GM12878 (cell line): ENCODE measurements at regions of chr11 and their contacts with region 1.

Region 1: GRCh38 chr11:33329705-33330329 is 72.6 kb downstream of the HIPK3 start:
- DNase-seq: no peak
- ATAC-seq: peak; percentile 97
- H3K4me3 ChIP-seq: no peak overlapping the region
- H3K27ac ChIP-seq: no peak overlapping the region
- H3K4me1 ChIP-seq: peaks cover under 1% of the 10 kb centered on the region; the same call in 1 of the 2 replicates
- H3K27me3 ChIP-seq: no peaks in the 10 kb centered on the region
- CTCF ChIP-seq: peak; percentile 62 to 79 (median 64)
- EP300 ChIP-seq: no peak
- POLR2A ChIP-seq: no peak
- RAD21 ChIP-seq: peak; percentile 87

Region 2: GRCh38 chr11:32953700-32954099 is 376.1 kb before region 1 on chr11:
- CTCF ChIA-PET with region 1: no interaction called
- POLR2A ChIA-PET with region 1: no interaction called
- RAD21 ChIA-PET with region 1: no interaction called
- SMC1A ChIA-PET with region 1: no interaction called
- in situ Hi-C with region 1: loop called (anchors 10 kb)
- intact Hi-C with region 1: no loop called
- DNase-seq: no peak
- ATAC-seq: no peak
- H3K4me3 ChIP-seq: no peak overlapping the region
- H3K27ac ChIP-seq: no peak overlapping the region
- H3K4me1 ChIP-seq: no peaks in the 10 kb centered on the region
- H3K27me3 ChIP-seq: no peaks in the 10 kb centered on the region
- CTCF ChIP-seq: no peak
- EP300 ChIP-seq: no peak
- POLR2A ChIP-seq: no peak
- RAD21 ChIP-seq: no peak

Region 3: GRCh38 chr11:32960553-32961164 is 369.2 kb before region 1 on chr11:
- CTCF ChIA-PET with region 1: no interaction called
- POLR2A ChIA-PET with region 1: no interaction called
- RAD21 ChIA-PET with region 1: no interaction called
- SMC1A ChIA-PET with region 1: no interaction called
- in situ Hi-C with region 1: loop called (anchors 10 kb)
- intact Hi-C with region 1: loop called (anchors 5 kb)
- DNase-seq: peak; percentile 21
- ATAC-seq: peak; percentile 65
- H3K4me3 ChIP-seq: no peak overlapping the region
- H3K27ac ChIP-seq: no peak overlapping the region
- H3K4me1 ChIP-seq: no peaks in the 10 kb centered on the region
- H3K27me3 ChIP-seq: no peaks in the 10 kb centered on the region
- CTCF ChIP-seq: peak; percentile 38 to 71 (median 59); a peak in 5 of 6 replicates
- EP300 ChIP-seq: no peak
- POLR2A ChIP-seq: no peak
- RAD21 ChIP-seq: peak; percentile 90

Region 4: GRCh38 chr11:33161120-33162005 is 168.5 kb before region 1 on chr11 and contains the start of gene CSTF3:
- CTCF ChIA-PET with region 1: interaction called, 134 read pairs
- POLR2A ChIA-PET with region 1: no interaction called
- RAD21 ChIA-PET with region 1: interaction called, 37 read pairs
- SMC1A ChIA-PET with region 1: interaction called, 65 read pairs
- in situ Hi-C with region 1: loop called (anchors 5 kb)
- intact Hi-C with region 1: loop called (anchors 1 kb)
- DNase-seq: peak; percentile 74
- ATAC-seq: peak; percentile 92
- H3K4me3 ChIP-seq: peak within 1 kb of the TSS; percentile 91
- H3K27ac ChIP-seq: peak within 1 kb of the TSS; percentile 97
- H3K4me1 ChIP-seq: no peaks in the 10 kb centered on the region
- H3K27me3 ChIP-seq: no peaks in the 10 kb centered on the region
- CTCF ChIP-seq: peak; percentile 19 to 23 (median 19); a peak in 3 of 6 replicates
- EP300 ChIP-seq: no peak; a peak in 1 of 4 replicates
- POLR2A ChIP-seq: peak; percentile 80
- RAD21 ChIP-seq: no peak
- polyA plus RNA-seq, gene CSTF3: 42.0 to 50.1 TPM

Region 5: GRCh38 chr11:33168709-33169200 is 161.1 kb before region 1 on chr11:
- CTCF ChIA-PET with region 1: interaction called, 134 read pairs
- POLR2A ChIA-PET with region 1: no interaction called
- RAD21 ChIA-PET with region 1: interaction called, 37 read pairs
- SMC1A ChIA-PET with region 1: interaction called, 65 read pairs
- in situ Hi-C with region 1: loop called (anchors 5 kb)
- intact Hi-C with region 1: loop called (anchors 1 kb)
- DNase-seq: no peak
- ATAC-seq: no peak
- H3K4me3 ChIP-seq: no peak overlapping the region
- H3K27ac ChIP-seq: no peak overlapping the region
- H3K4me1 ChIP-seq: no peaks in the 10 kb centered on the region
- H3K27me3 ChIP-seq: no peaks in the 10 kb centered on the region
- CTCF ChIP-seq: no peak
- EP300 ChIP-seq: no peak
- POLR2A ChIP-seq: no peak
- RAD21 ChIP-seq: no peak

Region 6: DNA sequence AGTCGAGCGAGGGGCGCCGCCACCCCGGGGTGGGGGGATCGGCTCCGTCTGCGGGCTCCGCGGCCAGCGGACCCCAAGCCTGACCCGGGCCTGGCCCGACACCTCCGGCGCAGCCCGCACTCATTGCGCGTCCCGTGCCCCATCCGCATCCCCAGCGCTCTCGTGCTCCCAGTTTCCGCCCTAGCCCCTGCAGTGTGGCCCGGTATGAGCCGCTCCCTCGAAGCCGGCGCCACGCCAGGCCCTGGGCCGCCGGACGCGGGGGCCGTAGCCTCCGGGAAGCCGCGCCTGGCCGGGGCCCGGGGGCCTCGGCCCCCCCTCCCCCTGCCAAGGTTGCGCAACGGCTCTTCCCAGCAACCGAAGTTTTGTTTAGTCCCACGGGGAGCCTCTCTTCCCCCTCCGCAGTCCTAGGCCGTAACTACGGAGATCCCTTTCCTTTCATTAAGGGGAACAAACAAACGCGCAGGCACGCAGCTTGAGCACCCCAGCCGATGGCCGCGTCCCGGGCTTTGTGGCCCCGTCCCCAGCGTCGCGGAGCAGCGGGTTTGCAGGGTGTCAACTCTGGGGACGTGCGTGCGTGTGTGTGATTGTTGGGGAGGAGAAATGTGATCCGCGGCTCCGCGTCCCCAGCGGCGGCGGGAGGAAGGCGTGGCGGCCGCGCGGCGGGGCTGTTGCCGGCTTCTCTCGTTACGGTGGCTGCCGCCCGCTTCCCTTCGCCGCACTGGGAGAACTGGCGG is 71.8 kb before region 1 on chr11:
- CTCF ChIA-PET with region 1: interaction called, 5 read pairs
- POLR2A ChIA-PET with region 1: interaction called, 3 read pairs
- RAD21 ChIA-PET with region 1: interaction called, 3 read pairs
- SMC1A ChIA-PET with region 1: interaction called, 4 read pairs
- in situ Hi-C with region 1: no loop called
- intact Hi-C with region 1: loop called (anchors 2 kb)
- DNase-seq: no peak
- ATAC-seq: peak; percentile 62
- H3K4me3 ChIP-seq: peak overlapping the region; percentile 76
- H3K27ac ChIP-seq: peak overlapping the region; percentile 98
- H3K4me1 ChIP-seq: peaks cover 5% of the 10 kb centered on the region; the same call in 1 of the 2 replicates
- H3K27me3 ChIP-seq: no peaks in the 10 kb centered on the region
- CTCF ChIP-seq: peak; percentile 16 to 38 (median 17); a peak in 2 of 6 replicates
- EP300 ChIP-seq: no peak
- POLR2A ChIP-seq: peak; percentile 86
- RAD21 ChIP-seq: no peak

Region 7: DNA sequence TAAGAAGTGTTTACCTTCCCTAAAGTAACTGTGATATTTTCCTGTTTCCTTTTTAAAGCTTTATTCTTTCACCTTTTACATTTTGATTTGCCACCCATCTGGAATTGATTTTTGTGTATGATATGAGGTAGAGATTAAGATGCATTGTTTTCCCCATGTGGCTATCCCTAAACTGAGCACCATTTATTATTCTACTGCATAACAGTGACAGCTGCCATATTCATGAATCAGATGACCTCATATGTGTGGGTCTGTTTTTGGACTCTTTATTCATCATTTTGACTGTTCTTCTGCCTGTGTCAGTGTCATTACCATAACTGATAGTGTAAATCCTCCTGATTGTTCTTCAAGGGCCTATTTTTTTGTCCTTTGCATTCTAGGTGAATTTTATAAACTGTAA is 21.8 kb before region 1 on chr11:
- CTCF ChIA-PET with region 1: no interaction called
- POLR2A ChIA-PET with region 1: no interaction called
- RAD21 ChIA-PET with region 1: no interaction called
- SMC1A ChIA-PET with region 1: no interaction called
- in situ Hi-C with region 1: no loop called
- intact Hi-C with region 1: no loop called
- DNase-seq: no peak
- ATAC-seq: peak; percentile 47; the same call in 1 of the 3 replicates
- H3K4me3 ChIP-seq: no peak overlapping the region
- H3K27ac ChIP-seq: no peak overlapping the region
- H3K4me1 ChIP-seq: no peaks in the 10 kb centered on the region
- H3K27me3 ChIP-seq: no peaks in the 10 kb centered on the region
- CTCF ChIP-seq: no peak
- EP300 ChIP-seq: no peak
- POLR2A ChIP-seq: no peak
- RAD21 ChIP-seq: no peak

Region 8: DNA sequence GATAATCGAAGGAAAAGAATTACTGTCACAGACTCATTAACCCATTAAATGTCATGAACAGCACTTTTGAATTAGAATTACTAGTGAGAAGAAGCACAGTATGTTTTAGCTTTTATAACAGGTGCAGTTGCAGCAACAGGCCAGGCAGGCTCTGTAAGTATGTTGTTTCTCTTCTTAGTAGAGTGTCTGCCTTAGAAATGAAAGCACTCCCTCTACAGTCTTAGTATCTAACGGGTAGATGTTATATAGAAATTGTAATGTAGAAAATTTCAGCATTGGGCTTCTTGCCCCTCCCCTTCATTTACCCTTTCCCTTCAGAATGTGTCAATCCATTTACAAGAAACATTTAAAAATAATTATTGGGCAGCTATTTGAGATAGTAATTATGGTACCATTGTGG is 14.8 kb after region 1 on chr11:
- CTCF ChIA-PET with region 1: interaction called, 8 read pairs
- POLR2A ChIA-PET with region 1: interaction called, 3 read pairs
- RAD21 ChIA-PET with region 1: interaction called, 7 read pairs
- SMC1A ChIA-PET with region 1: interaction called, 10 read pairs
- in situ Hi-C with region 1: no loop called
- intact Hi-C with region 1: no loop called
- DNase-seq: no peak
- ATAC-seq: peak; percentile 48
- H3K4me3 ChIP-seq: no peak overlapping the region
- H3K27ac ChIP-seq: no peak overlapping the region
- H3K4me1 ChIP-seq: no peaks in the 10 kb centered on the region
- H3K27me3 ChIP-seq: no peaks in the 10 kb centered on the region
- CTCF ChIP-seq: peak in 1 of 3 experiments; percentile 12; a peak in 1 of 6 replicates
- EP300 ChIP-seq: no peak
- POLR2A ChIP-seq: no peak
- RAD21 ChIP-seq: no peak

Region 9: DNA sequence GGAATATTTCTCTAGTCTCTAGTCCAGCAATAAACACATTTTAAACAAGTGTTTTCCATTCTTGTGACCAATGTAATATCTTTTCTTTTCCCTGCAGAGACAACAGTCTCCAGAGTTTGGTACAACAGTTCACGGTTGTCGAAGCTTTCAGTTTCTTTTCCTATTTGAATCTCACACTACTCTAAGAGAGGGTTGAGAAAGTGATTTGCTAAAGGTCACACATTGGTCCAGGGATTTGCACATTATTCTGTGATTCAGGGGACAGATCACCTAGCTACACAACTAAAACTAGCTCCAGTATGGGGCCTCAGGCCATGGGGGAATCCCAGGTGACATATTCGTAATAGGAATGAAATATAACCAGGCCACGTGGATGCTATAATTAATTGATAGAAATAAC is 59.8 kb after region 1 on chr11:
- CTCF ChIA-PET with region 1: no interaction called
- POLR2A ChIA-PET with region 1: no interaction called
- RAD21 ChIA-PET with region 1: no interaction called
- SMC1A ChIA-PET with region 1: no interaction called
- in situ Hi-C with region 1: no loop called
- intact Hi-C with region 1: no loop called
- DNase-seq: peak; percentile 45
- ATAC-seq: peak; percentile 80
- H3K4me3 ChIP-seq: peak overlapping the region; percentile 45; the same call in 1 of the 2 replicates
- H3K27ac ChIP-seq: peak overlapping the region; percentile 85
- H3K4me1 ChIP-seq: peaks cover 28% of the 10 kb centered on the region
- H3K27me3 ChIP-seq: no peaks in the 10 kb centered on the region
- CTCF ChIP-seq: no peak
- EP300 ChIP-seq: no peak
- POLR2A ChIP-seq: no peak
- RAD21 ChIP-seq: no peak

Region 10: GRCh38 chr11:33402066-33402465 is 72.2 kb after region 1 on chr11:
- CTCF ChIA-PET with region 1: no interaction called
- POLR2A ChIA-PET with region 1: no interaction called
- RAD21 ChIA-PET with region 1: no interaction called
- SMC1A ChIA-PET with region 1: no interaction called
- in situ Hi-C with region 1: no loop called
- intact Hi-C with region 1: no loop called
- DNase-seq: no peak
- ATAC-seq: peak; percentile 58
- H3K4me3 ChIP-seq: no peak overlapping the region
- H3K27ac ChIP-seq: no peak overlapping the region
- H3K4me1 ChIP-seq: peaks cover 4% of the 10 kb centered on the region; the same call in 1 of the 2 replicates
- H3K27me3 ChIP-seq: no peaks in the 10 kb centered on the region
- CTCF ChIP-seq: no peak
- EP300 ChIP-seq: no peak
- POLR2A ChIP-seq: no peak
- RAD21 ChIP-seq: no peak